Activated CD4-positive, alpha-beta memory T cell treated with anti-CD3 and anti-CD28 coated beads for 36 hours (primary cell): ENCODE measurements at regions of chr15 and their contacts with region 1.

Region 1: DNA sequence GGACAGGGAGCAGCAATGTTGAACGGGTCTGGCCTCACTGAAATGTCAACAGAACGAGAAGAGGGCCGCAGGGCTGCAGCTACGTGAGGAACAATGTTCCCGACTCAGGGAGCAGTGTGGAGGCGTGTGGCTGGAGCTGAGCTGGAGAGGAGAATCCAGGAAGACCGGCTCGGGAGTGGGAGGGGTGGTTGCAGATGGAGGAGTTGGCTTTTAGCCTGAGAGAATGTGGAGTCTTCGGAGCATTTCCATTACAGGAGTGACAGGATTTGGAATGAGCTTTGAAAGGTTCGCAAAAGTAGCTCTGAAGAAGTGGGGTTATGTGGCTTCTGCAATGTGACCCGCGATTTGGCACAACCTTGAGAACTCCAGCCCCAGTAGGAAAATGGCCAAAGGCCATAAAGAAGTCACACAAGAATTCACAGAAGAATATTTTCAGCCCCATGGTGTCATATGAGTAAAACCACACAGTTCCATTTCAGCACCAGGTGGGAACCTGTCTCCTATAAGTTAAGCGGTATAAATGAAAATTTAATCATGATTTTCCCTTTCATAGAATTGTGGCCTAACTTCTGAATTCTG is 78.8 kb upstream of the NSMCE3 start:
- DNase-seq: no peak
- H3K4me3 Mint-ChIP-seq: no peak overlapping the region
- H3K27ac Mint-ChIP-seq: no peak overlapping the region
- H3K4me1 Mint-ChIP-seq: no peaks in the 10 kb centered on the region
- H3K27me3 Mint-ChIP-seq: peaks cover 2% of the 10 kb centered on the region

Region 2: GRCh38 chr15:29115093-29115991 is 233.1 kb before region 1 on chr15:
- CTCF ChIA-PET with region 1: no interaction called
- POLR2A ChIA-PET with region 1: no interaction called
- intact Hi-C with region 1: no loop called
- DNase-seq: no peak
- H3K4me3 Mint-ChIP-seq: no peak overlapping the region
- H3K27ac Mint-ChIP-seq: no peak overlapping the region
- H3K4me1 Mint-ChIP-seq: peaks cover 10% of the 10 kb centered on the region
- H3K27me3 Mint-ChIP-seq: peaks cover 3% of the 10 kb centered on the region

Region 3: GRCh38 chr15:29259233-29259632 is 89.2 kb before region 1 on chr15:
- CTCF ChIA-PET with region 1: no interaction called
- POLR2A ChIA-PET with region 1: no interaction called
- intact Hi-C with region 1: no loop called
- DNase-seq: no peak
- H3K4me3 Mint-ChIP-seq: no peak overlapping the region
- H3K27ac Mint-ChIP-seq: no peak overlapping the region
- H3K4me1 Mint-ChIP-seq: no peaks in the 10 kb centered on the region
- H3K27me3 Mint-ChIP-seq: no peaks in the 10 kb centered on the region

Region 4: GRCh38 chr15:29322415-29322814 is 26.0 kb before region 1 on chr15:
- CTCF ChIA-PET with region 1: no interaction called
- POLR2A ChIA-PET with region 1: no interaction called
- intact Hi-C with region 1: no loop called
- DNase-seq: no peak
- H3K4me3 Mint-ChIP-seq: no peak overlapping the region
- H3K27ac Mint-ChIP-seq: no peak overlapping the region
- H3K4me1 Mint-ChIP-seq: no peaks in the 10 kb centered on the region
- H3K27me3 Mint-ChIP-seq: peaks cover 11% of the 10 kb centered on the region

Region 5: DNA sequence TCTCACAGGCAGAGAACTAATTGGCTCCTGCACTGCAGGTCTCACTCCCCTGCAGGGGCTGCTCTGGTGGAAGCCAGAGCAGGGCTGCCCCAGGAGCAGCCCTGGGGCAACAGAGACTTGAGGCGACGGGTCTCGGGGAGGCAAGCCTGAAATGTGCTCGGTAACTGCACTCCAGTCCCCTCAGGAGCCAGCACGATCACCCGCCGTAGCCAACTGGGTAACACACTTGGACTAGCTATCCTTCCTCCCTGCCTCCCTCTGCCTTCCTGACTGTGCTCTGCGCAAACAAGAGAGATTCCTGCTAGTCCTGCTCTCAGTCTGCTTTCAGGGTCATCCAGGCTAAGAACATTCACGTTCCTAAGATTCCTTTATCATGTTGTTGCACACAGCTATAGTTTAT is 61.9 kb after region 1 on chr15:
- CTCF ChIA-PET with region 1: no interaction called
- POLR2A ChIA-PET with region 1: no interaction called
- intact Hi-C with region 1: no loop called
- DNase-seq: no peak
- H3K4me3 Mint-ChIP-seq: no peak overlapping the region
- H3K27ac Mint-ChIP-seq: no peak overlapping the region
- H3K4me1 Mint-ChIP-seq: no peaks in the 10 kb centered on the region
- H3K27me3 Mint-ChIP-seq: peaks cover 10% of the 10 kb centered on the region

Region 6: DNA sequence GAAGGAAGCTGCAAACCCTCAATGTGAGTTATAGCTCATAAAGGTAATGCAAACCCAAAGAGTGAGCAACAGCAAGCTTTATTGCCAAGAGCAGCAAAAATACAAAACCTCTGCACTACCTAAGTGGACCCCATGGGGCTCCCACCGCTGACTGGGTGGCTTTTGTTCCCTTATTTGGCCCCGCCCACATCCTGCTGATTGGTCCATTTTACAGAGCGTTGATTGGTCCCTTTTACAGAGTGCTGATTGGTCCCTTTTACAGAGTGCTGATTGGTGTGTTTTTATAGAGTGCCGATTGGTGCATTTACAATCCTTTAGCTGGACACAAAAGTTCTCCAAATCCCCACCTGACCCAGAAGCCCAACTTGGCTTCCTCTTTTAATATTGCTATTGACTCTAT is 75.7 kb after region 1 on chr15:
- CTCF ChIA-PET with region 1: no interaction called
- POLR2A ChIA-PET with region 1: no interaction called
- intact Hi-C with region 1: loop called (anchors 10 kb)
- DNase-seq: no peak
- H3K4me3 Mint-ChIP-seq: no peak overlapping the region
- H3K27ac Mint-ChIP-seq: no peak overlapping the region
- H3K4me1 Mint-ChIP-seq: no peaks in the 10 kb centered on the region
- H3K27me3 Mint-ChIP-seq: peaks cover 2% of the 10 kb centered on the region